Activated CD4-positive, alpha-beta memory T cell treated with anti-CD3 and anti-CD28 coated beads for 36 hours (primary cell): ENCODE measurements at regions of chr2 and their contacts with region 1.

Region 1: DNA sequence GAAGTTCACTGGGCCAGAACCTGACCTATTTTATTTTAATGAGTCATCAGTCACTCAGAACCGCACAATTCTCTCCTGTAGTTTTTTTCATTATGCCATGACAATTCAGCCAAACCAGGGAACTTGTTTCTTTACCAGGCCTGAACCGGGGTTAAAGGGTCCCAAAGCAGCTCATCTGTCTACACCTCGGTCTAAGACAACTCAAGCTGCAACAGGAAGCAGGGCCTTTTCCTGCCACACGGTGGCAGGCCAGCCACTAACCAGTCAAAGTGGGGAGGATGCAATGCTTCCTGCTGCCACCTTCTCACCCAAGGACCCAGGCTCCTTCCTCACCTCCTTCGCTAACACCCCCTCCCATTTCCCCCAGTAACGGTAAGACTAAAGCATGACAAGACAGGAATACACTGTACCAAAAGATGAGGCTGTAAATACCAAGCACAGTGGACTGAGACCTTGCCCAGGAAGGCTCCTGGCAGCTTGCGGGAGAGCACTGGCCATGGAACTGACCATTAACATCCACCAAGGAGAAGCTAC is 56.7 kb upstream of the ACKR3 start:
- DNase-seq: peak; percentile 81
- H3K4me3 Mint-ChIP-seq: no peak overlapping the region
- H3K27ac Mint-ChIP-seq: no peak overlapping the region
- H3K4me1 Mint-ChIP-seq: peaks cover 6% of the 10 kb centered on the region
- H3K27me3 Mint-ChIP-seq: peaks cover 7% of the 10 kb centered on the region

Region 2: GRCh38 chr2:236536727-236537398 is 23.9 kb after region 1 on chr2:
- CTCF ChIA-PET with region 1: interaction called, 12 read pairs
- POLR2A ChIA-PET with region 1: interaction called, 3 read pairs
- intact Hi-C with region 1: no loop called
- DNase-seq: peak; percentile 60
- H3K4me3 Mint-ChIP-seq: peak overlapping the region; percentile 74
- H3K27ac Mint-ChIP-seq: peak overlapping the region; percentile 73
- H3K4me1 Mint-ChIP-seq: peaks cover 50% of the 10 kb centered on the region
- H3K27me3 Mint-ChIP-seq: no peaks in the 10 kb centered on the region

Region 3: DNA sequence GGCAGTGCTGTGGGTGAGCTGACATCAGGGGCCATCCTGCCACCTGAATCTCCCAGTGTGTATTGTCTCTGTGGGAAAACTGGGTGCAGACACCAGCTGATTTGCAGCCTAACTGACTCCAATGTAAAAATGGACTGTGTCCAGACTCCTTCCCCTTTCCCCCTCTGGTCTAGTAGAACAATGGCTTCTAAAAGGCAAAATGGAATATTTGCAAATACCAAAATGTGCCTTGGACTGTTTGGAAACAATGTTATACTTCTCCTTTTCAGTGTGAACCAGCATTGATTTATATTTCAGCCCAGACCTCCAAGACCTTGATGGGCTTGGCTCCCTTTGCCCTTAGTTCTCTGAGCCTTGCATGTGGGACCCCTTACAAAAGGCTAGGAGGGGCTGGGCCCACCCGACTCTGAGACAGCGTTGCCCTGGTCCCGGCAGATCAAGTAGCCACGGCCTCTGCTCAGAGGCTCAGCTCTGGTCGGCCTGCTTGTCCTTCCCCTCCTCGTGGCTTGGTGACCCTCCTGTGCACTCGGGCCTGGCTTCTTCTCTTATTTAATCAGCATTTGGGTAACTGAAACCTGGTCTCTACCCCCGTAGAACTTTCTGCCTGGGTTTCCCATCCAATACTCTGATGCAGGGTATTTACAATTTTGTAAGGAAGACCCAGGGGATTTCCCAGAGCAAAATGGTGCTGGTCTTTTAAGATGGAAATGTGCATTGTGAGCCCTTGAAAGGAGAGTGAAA is 38.7 kb after region 1 on chr2:
- CTCF ChIA-PET with region 1: interaction called, 23 read pairs
- POLR2A ChIA-PET with region 1: interaction called, 3 read pairs
- intact Hi-C with region 1: no loop called
- DNase-seq: no peak
- H3K4me3 Mint-ChIP-seq: peak overlapping the region; percentile 13
- H3K27ac Mint-ChIP-seq: peak overlapping the region; percentile 68
- H3K4me1 Mint-ChIP-seq: peaks cover 93% of the 10 kb centered on the region
- H3K27me3 Mint-ChIP-seq: no peaks in the 10 kb centered on the region

Region 4: GRCh38 chr2:236569573-236569973 is 56.6 kb after region 1 on chr2 and contains the start of gene ACKR3:
- CTCF ChIA-PET with region 1: interaction called, 135 read pairs
- POLR2A ChIA-PET with region 1: interaction called, 7 read pairs
- intact Hi-C with region 1: loop called (anchors 1 kb)
- DNase-seq: peak; percentile 76
- H3K4me3 Mint-ChIP-seq: peak within 1 kb of the TSS; percentile 32
- H3K27ac Mint-ChIP-seq: no peak within 1 kb of the TSS
- H3K4me1 Mint-ChIP-seq: peaks cover 18% of the 10 kb centered on the region
- H3K27me3 Mint-ChIP-seq: no peaks in the 10 kb centered on the region
- total RNA-seq, gene ACKR3: 1.2 TPM

Region 5: GRCh38 chr2:236642584-236643291 is 129.8 kb after region 1 on chr2:
- CTCF ChIA-PET with region 1: no interaction called
- POLR2A ChIA-PET with region 1: no interaction called
- intact Hi-C with region 1: no loop called
- DNase-seq: no peak
- H3K4me3 Mint-ChIP-seq: no peak overlapping the region
- H3K27ac Mint-ChIP-seq: no peak overlapping the region
- H3K4me1 Mint-ChIP-seq: no peaks in the 10 kb centered on the region
- H3K27me3 Mint-ChIP-seq: peaks cover 14% of the 10 kb centered on the region

Region 6: DNA sequence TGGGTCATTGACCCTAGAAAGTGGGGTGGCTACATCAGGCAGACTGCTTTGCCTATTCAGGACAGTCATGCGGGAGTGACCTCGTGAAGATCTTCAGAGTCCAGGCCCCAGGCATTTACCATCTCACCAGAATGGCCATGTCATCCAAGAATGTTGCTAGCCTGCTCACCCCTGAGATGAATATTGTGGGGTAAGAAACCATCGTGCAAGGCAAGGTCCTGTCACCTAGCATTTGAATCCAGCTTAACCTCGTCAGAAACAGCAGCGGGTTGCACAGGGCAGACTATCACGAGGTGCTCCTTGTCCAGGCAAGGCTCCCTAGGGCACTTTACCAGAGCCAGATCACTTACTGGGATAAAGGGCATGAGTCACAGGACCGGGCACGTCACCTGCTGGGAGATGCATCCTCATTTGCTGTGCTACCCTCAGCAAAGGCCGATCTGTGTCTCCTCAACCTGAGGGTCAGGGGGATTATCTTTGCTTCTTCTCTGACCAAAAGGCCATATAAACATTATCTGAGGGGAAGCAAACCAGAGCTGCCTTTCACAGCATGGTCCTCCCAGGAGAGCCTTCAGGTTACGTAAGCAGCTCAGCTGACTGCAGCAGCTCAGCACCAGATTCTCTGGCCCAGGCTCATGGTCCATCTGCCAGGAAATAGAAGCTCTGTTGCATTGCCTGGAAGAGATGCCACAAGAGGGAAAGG is 219.1 kb after region 1 on chr2:
- CTCF ChIA-PET with region 1: no interaction called
- POLR2A ChIA-PET with region 1: no interaction called
- intact Hi-C with region 1: no loop called
- DNase-seq: no peak
- H3K4me3 Mint-ChIP-seq: no peak overlapping the region
- H3K27ac Mint-ChIP-seq: no peak overlapping the region
- H3K4me1 Mint-ChIP-seq: no peaks in the 10 kb centered on the region
- H3K27me3 Mint-ChIP-seq: peaks cover 8% of the 10 kb centered on the region

Region 7: DNA sequence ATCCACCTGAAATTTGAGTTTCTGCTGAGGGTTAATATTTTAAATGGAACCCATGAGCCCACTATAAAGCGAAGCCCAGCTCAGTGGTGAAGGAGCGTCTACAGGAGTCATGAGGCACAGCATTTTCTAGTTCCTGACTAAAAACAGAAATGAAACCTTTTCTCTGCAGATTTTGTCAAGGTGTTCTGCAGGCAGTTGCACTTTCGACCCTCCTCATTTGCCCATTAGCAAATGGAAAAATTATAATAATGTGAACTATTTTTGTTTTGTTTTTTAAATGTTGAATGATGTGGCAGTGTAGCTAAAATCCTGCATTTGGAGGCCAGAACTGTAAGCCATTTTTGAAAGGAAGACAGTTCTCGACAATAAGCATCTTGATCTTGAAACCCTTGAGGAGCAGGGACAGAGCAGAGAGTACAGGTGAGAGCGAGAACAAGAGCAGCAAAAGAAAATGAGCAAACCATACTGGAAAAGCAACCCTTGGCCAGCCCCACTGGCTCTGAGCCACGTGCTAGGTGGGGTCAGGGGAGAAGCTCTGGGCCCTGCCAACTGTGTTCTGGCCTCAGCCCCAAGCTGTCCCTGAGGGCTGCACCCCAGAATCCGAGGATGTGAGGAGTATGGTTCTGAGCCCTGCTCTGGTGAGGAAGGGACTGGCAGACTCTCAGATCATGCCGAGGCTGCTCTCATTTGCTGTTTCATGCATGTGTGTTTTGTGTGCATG is 546.3 kb after region 1 on chr2:
- CTCF ChIA-PET with region 1: interaction called, 8 read pairs
- POLR2A ChIA-PET with region 1: no interaction called
- intact Hi-C with region 1: loop called (anchors 1 kb)
- DNase-seq: peak; percentile 31
- H3K4me3 Mint-ChIP-seq: no peak overlapping the region
- H3K27ac Mint-ChIP-seq: peak overlapping the region; percentile 40
- H3K4me1 Mint-ChIP-seq: peaks cover 21% of the 10 kb centered on the region
- H3K27me3 Mint-ChIP-seq: no peaks in the 10 kb centered on the region